PC-9 (cell line): ENCODE measurements at regions of chr6 and their contacts with region 1.

Region 1: DNA sequence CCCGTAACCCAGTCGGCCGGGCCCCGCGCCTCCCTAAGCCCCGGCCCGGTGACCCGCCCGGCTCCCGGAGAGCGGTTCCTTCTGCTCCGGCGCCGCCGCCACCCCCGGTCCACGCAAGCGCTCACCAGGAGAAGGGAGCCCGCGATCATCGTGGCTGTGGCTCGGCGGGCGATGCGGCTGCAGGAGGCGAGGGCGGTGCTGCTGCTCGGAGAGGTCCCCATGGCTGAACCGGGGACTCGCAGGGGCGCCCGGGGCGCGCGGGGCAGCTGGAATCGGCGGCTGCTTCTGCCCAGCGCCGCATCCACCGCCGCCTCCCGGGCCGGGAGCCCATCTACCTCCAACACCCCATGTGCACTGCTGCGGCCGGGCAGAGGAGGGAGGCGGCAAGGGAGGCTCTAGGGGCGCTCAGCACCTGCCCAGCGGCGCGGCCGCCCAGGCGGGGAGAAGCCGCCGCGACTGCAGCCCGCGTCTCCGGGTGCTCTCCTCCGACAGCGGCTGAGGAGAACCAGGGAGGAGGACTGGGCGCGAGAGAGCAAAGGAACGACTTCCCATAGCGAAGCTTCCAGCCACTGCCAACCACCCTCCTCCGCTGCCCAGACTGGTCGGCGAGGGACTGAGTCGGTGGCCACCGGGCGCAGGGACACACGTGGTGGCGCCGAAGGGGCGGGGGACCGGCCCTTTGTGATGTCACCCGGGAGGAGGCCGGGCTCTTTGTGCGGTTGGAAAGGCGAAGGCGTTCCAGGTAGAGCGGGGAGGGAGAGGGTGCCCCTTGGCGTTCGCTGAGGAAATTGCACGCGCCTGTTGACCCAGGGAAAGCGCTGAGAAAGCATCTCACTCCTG is at the start of gene TNFRSF21:
- DNase-seq: peak; percentile 85 to 95
- H3K4me3 ChIP-seq: peak within 1 kb of the TSS; percentile 91
- H3K27ac ChIP-seq: peak within 1 kb of the TSS; percentile 90
- H3K4me1 ChIP-seq: peaks cover 32% of the 10 kb centered on the region
- H3K27me3 ChIP-seq: no peaks in the 10 kb centered on the region
- CTCF ChIP-seq: peak; percentile 87
- total RNA-seq, gene TNFRSF21: 172 and 219 TPM in 2 replicates

Region 2: GRCh38 chr6:46419576-46420002 is 889.9 kb before region 1 on chr6:
- CTCF ChIA-PET with region 1: no interaction called
- POLR2A ChIA-PET with region 1: no interaction called
- intact Hi-C with region 1: loop called (anchors 10 kb)
- DNase-seq: peak in 1 of 2 experiments; percentile 48
- H3K4me3 ChIP-seq: no peak overlapping the region
- H3K27ac ChIP-seq: no peak overlapping the region
- H3K4me1 ChIP-seq: peaks cover 11% of the 10 kb centered on the region; the same call in 1 of the 2 replicates
- H3K27me3 ChIP-seq: no peaks in the 10 kb centered on the region
- CTCF ChIP-seq: peak; percentile 83

Region 3: GRCh38 chr6:46848684-46849360 is 460.7 kb before region 1 on chr6:
- CTCF ChIA-PET with region 1: no interaction called
- POLR2A ChIA-PET with region 1: no interaction called
- intact Hi-C with region 1: loop called (anchors 2 kb)
- DNase-seq: peak; percentile 76 to 85
- H3K4me3 ChIP-seq: no peak overlapping the region
- H3K27ac ChIP-seq: 0 out of 2 replicates have a peak overlapping the region, but pooled peaks have one; percentile 12
- H3K4me1 ChIP-seq: peaks cover 37% of the 10 kb centered on the region
- H3K27me3 ChIP-seq: no peaks in the 10 kb centered on the region
- CTCF ChIP-seq: peak; percentile 96

Region 4: DNA sequence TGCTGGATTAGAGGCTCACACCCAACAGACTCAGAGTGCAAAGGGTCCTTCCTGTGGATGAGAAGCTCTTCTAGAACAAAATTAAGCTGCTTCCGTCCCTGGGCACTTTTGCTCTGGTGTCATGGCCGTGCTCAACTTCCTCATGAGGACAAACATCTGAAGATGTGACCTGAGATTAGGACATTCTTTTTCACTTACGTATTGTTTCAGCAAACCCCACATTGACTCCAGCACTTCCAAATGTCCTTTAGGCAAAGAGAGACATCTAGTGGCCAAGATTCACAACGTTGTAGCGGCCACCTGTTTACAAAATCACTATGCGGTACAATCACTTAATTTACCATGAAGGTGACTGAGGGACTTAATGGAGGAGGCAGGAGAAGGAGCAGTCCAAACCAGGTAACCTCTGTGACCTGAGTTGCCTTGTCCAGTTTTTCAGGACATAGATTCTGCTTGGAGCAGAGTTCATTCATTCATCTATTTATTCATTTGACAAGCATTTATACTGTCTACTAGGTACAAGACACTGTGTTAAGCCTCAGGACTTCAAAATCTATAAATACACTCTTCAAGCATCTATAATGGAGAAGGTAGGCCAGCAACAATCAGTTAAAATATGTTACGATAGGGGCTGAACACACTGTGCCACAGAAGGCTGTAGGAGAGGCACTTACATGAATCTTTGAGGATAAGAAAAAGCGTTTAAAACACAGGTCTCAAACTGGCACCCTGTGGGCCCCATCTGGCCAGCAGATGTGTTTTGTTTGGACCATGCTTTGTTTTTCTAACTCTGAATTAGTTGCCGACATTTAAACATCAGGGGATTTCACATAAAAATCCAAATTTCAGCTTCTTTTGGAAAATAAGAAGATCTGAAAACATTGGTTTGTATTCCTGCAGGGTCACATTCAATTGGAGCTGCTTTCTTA is 261.8 kb before region 1 on chr6:
- CTCF ChIA-PET with region 1: no interaction called
- POLR2A ChIA-PET with region 1: interaction called, 11 read pairs
- intact Hi-C with region 1: loop called (anchors 2 kb)
- DNase-seq: peak; percentile 72 to 99
- H3K4me3 ChIP-seq: no peak overlapping the region; the same call in 1 of the 2 replicates
- H3K27ac ChIP-seq: peak overlapping the region; percentile 98
- H3K4me1 ChIP-seq: peaks cover 60% of the 10 kb centered on the region
- H3K27me3 ChIP-seq: no peaks in the 10 kb centered on the region
- CTCF ChIP-seq: peak; percentile 80

Region 5: DNA sequence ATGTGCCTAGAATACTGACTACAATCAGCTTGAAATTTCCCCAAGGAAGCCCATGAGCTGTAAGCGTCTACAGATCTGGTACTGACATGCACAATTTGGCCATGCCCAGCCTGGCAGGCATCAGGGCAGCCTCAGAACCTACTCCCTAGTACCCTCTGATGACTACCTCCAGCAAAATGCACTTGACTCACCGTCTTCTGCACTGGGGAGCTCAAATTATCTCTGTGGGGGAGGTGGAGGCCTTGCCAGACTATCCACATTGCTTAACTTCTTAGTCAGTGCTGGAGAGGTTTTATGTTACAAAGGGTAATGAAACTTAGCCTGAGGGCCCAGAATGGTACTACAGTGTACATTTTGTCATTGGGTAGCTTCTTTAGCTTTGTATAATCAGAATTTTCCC is 141.3 kb before region 1 on chr6:
- CTCF ChIA-PET with region 1: no interaction called
- POLR2A ChIA-PET with region 1: no interaction called
- intact Hi-C with region 1: loop called (anchors 1 kb)
- DNase-seq: peak; percentile 87 to 98
- H3K4me3 ChIP-seq: no peak overlapping the region
- H3K27ac ChIP-seq: peak overlapping the region; percentile 93
- H3K4me1 ChIP-seq: peaks cover 66% of the 10 kb centered on the region
- H3K27me3 ChIP-seq: no peaks in the 10 kb centered on the region
- CTCF ChIP-seq: no peak

Region 6: DNA sequence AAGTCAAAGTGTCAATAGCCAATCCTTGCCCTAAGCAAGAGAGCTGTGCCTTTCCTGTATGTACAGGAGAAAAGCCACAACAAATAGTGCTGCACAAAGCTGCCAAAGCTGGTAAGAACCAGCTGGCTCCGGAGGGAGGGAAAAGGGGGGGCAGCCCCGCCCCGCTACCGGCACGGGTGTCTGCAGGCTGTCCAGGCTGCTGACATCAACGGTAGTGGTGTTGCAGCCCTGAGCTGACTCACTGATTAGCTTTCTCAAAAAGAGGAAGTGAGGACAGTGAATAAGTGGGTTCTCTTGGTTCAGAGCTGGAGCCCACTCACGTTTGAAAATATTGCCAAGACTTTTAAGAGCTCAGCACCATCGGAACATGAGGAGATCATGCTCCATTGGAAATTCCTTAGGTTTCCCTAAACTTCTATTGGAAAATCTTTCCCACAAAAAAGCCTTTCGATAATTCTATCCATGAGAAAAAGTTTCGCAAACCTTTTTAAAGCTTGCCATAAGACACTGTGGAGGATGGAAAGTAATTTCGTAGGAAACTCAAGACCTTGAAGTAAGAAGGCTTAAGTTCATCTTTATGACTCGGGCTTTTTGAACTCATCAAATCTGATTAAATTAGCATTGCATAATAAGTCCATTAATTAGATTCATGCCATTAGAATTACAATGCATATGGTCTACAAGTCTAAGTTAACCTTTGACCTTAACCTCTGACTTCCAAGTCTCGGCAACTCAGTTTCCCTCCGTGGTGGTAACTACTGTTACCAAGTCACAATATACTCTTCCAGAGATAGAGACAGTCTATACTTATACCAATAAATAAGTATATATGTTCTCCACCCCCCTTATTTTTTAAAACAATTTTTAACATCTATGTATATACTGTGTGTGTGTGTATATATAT is 66.8 kb before region 1 on chr6:
- CTCF ChIA-PET with region 1: no interaction called
- POLR2A ChIA-PET with region 1: no interaction called
- intact Hi-C with region 1: loop called (anchors 5 kb)
- DNase-seq: peak; percentile 85 to 86
- H3K4me3 ChIP-seq: peak overlapping the region; percentile 14; the same call in 1 of the 2 replicates
- H3K27ac ChIP-seq: peak overlapping the region; percentile 85
- H3K4me1 ChIP-seq: peaks cover 87% of the 10 kb centered on the region
- H3K27me3 ChIP-seq: no peaks in the 10 kb centered on the region
- CTCF ChIP-seq: no peak